Transverse colon (tissue), 4 donors: ENCODE measurements at regions of chr18 and their contacts with region 1.

Region 1: GRCh38 chr18:25239581-25240419 is 112.2 kb downstream of the ZNF521 start:
- DNase-seq: no peak
- H3K4me3 ChIP-seq: no peak overlapping the region
- H3K27ac ChIP-seq: peak overlapping the region in 1 of 4 donors; percentile 18
- H3K4me1 ChIP-seq: no peaks in the 10 kb centered on the region
- H3K27me3 ChIP-seq: no peaks in the 10 kb centered on the region
- CTCF ChIP-seq: no peak
- EP300 ChIP-seq: no peak
- POLR2A ChIP-seq: no peak

Region 2: DNA sequence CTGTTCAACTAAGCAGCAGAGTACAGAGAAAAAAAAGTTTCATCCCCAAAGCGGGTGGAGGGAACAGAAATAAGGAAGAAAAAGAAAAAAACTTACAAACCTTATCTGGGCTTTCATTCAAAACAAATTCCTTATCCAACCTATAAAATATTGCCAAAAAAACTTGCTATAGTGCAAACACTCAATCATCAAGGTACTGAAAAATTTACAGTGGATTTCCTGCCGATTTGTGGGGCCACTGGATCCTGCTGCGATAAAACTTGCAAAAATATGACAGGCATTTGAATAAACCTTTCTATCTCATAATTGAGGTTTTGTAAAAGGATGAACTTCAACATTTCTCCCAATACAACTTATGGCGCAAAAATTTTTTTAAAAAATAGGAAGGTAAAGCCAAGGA is 35.1 kb after region 1 on chr18:
- in situ Hi-C with region 1: no loop called
- intact Hi-C with region 1: loop called (anchors 1 kb)
- DNase-seq: no peak
- H3K4me3 ChIP-seq: no peak overlapping the region
- H3K27ac ChIP-seq: no peak overlapping the region
- H3K4me1 ChIP-seq: no peaks in the 10 kb centered on the region
- H3K27me3 ChIP-seq: no peaks in the 10 kb centered on the region
- CTCF ChIP-seq: no peak
- EP300 ChIP-seq: no peak
- POLR2A ChIP-seq: no peak

Region 3: GRCh38 chr18:25289001-25289631 is 49.3 kb after region 1 on chr18:
- in situ Hi-C with region 1: no loop called
- intact Hi-C with region 1: no loop called
- DNase-seq: no peak
- H3K4me3 ChIP-seq: no peak overlapping the region
- H3K27ac ChIP-seq: peak overlapping the region; percentile 8 to 43 (median 24)
- H3K4me1 ChIP-seq: peaks cover 0 to 11% (median 0%) of the 10 kb centered on the region in 4 donors
- H3K27me3 ChIP-seq: no peaks in the 10 kb centered on the region
- CTCF ChIP-seq: no peak
- EP300 ChIP-seq: no peak
- POLR2A ChIP-seq: no peak